ENCODE measurements at regions of chr11 and their contacts with region 1.

Region 1: DNA sequence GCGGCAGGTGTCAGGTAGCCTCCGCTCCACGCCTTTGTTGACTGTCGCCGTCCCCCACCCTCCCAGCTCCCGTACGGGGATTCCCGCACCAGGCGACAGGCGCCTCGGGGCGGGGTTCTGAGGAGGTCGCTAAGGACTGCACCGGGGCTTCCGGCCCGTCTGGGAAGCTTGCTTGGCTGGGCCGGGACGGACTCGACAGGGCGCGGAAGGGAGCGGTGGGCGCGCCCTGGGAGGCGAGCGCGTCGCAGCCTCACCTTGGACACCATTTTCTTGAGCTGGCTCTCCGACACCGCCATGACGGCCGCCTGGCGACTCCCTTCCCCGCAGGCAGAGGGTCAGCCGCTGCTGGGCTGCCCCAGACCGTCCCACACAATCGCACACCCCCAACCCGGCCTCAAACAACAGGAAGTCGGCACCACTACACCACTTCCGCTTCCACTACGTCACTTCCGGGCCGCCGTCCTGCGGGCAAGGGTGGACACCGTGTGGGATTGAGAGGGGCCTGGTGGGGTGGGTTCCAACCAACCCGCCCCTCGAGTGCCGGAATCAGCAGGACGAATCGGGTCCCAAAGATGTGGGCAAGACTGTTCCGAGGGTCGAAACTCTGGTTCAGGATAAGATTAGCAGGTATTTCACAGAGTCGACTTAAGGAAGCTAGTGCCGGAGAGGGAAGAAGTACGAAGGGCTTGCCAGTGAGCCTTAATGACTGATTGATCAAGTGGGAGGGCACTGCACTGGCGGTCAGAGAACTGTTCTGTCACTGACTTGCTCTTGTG is at the start of gene TSG101:
- DNase-seq: peak; percentile 91
- H3K4me3 ChIP-seq: peak within 1 kb of the TSS; percentile 90 to 92
- H3K27ac ChIP-seq: peak within 1 kb of the TSS; percentile 91 to 97
- H3K4me1 ChIP-seq: peaks cover 2% of the 10 kb centered on the region
- H3K27me3 ChIP-seq: no peaks in the 10 kb centered on the region
- CTCF ChIP-seq: no peak
- POLR2A ChIP-seq: peak; percentile 66
- total RNA-seq, gene TSG101: 60.5 to 94.5 TPM

Region 2: GRCh38 chr11:17219016-17219415 is 1307.7 kb before region 1 on chr11:
- intact Hi-C with region 1: loop called (anchors 10 kb)
- DNase-seq: no peak
- H3K4me3 ChIP-seq: no peak overlapping the region
- H3K27ac ChIP-seq: no peak overlapping the region
- H3K4me1 ChIP-seq: no peaks in the 10 kb centered on the region
- H3K27me3 ChIP-seq: no peaks in the 10 kb centered on the region
- CTCF ChIP-seq: no peak
- POLR2A ChIP-seq: no peak

Region 3: GRCh38 chr11:18321980-18322711 is 204.6 kb before region 1 on chr11 and contains the starts of genes GTF2H1 and HPS5:
- intact Hi-C with region 1: loop called (anchors 5 kb)
- DNase-seq: peak; percentile 97
- H3K4me3 ChIP-seq: peak within 1 kb of the TSS; percentile 73 to 86
- H3K27ac ChIP-seq: peak within 1 kb of the TSS; percentile 98
- H3K4me1 ChIP-seq: peaks cover 11% of the 10 kb centered on the region
- H3K27me3 ChIP-seq: no peaks in the 10 kb centered on the region
- CTCF ChIP-seq: peak in 2 of 4 experiments; percentile 5 to 9
- POLR2A ChIP-seq: peak; percentile 93
- total RNA-seq, gene GTF2H1: 34.8 to 89.0 TPM
- total RNA-seq, gene HPS5: 20.5 to 56.0 TPM

Region 4: DNA sequence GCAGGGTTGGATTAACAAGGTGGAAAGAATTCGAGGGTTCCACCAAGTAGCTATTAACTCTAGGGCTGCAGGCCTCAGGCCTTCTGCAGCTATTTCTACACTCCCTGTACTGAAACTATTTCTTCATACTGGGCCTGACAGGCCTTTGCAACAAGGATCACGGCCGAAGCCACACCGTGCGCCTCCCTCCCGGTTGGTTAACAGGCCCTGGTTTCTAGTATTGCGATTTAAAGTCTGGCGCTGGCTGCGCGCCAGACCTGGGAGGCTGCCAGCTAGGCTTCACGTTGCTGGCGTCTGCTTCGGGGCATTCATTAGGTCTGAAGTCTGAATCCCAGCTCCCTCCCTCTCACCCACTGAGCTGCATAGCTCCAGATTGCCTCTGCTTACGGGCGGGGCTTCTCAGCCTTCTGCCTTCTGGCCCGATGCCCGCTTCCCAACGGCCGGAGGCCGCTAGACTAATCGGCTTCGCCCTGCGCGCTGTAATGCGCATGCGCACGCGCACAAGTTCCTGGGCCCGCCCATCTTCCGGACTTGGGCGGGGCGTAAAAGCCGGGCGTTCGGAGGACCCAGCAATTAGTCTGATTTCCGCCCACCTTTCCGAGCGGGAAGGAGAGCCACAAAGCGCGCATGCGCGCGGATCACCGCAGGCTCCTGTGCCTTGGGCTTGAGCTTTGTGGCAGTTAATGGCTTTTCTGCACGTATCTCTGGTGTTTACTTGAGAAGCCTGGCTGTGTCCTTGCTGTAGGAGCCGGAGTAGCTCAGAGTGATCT is 130.8 kb before region 1 on chr11:
- intact Hi-C with region 1: loop called (anchors 5 kb)
- DNase-seq: peak; percentile 97
- H3K4me3 ChIP-seq: peak overlapping the region; percentile 49 to 79
- H3K27ac ChIP-seq: peak overlapping the region; percentile 86 to 92
- H3K4me1 ChIP-seq: peaks cover 3% of the 10 kb centered on the region
- H3K27me3 ChIP-seq: no peaks in the 10 kb centered on the region
- CTCF ChIP-seq: peak in 1 of 4 experiments; percentile 17
- POLR2A ChIP-seq: peak; percentile 81

Region 5: DNA sequence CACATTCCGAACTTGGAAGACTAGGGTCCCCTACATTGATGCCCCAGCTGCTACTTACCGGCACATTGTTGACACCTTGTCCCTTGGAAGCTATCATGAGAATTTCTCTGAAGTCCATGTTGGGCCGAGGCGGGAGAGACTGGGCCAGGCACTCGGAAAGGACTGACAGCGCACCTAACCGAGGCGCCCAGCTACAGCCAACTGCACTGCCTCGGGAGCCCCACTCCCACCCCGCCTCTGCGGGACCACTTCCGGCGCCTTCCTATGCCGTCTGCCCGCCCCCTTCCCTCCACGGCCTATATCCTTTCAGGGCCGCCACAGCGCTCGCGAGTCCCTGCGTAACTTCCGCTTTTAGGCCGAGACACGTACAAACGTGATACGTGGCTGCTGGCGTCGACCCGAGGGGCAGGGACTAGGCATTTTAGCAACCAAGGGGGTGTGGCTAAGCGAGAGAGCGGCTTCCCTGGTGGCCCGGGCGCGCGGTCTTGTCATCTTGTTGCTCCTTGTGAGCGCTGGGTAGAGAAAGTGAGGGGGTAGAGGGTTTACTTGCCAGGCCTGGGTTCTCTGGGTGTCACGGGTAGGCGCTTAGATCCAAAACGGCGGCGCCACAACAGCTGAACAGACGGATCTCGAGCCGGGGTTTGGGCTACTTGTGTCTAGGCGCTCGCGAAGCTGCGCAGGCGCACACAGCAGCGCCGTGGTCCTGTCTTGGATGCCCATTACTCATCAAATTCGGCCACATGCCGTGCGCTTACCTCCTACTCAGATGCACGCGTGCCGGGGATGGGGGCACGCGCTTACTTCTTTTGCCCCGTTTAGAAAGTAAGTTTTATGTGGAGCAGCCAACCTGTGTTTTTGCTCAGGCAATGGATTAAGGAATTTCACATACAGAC is 107.7 kb after region 1 on chr11 and contains the start of gene SPTY2D1:
- intact Hi-C with region 1: loop called (anchors 5 kb)
- DNase-seq: peak; percentile 100
- H3K4me3 ChIP-seq: peak within 1 kb of the TSS; percentile 72 to 83
- H3K27ac ChIP-seq: peak within 1 kb of the TSS; percentile 89 to 91
- H3K4me1 ChIP-seq: no peaks in the 10 kb centered on the region
- H3K27me3 ChIP-seq: no peaks in the 10 kb centered on the region
- CTCF ChIP-seq: peak in 3 of 4 experiments; percentile 11 to 50 (median 22)
- POLR2A ChIP-seq: peak; percentile 93
- total RNA-seq, gene SPTY2D1: 18.0 to 19.3 TPM

Region 6: GRCh38 chr11:19013181-19013857 is 486.6 kb after region 1 on chr11:
- intact Hi-C with region 1: no loop called
- DNase-seq: no peak
- H3K4me3 ChIP-seq: no peak overlapping the region
- H3K27ac ChIP-seq: no peak overlapping the region
- H3K4me1 ChIP-seq: no peaks in the 10 kb centered on the region
- H3K27me3 ChIP-seq: no peaks in the 10 kb centered on the region
- CTCF ChIP-seq: no peak
- POLR2A ChIP-seq: no peak

Measured in prostate gland (tissue), 2 donors.